Dendritic cell treated with granulocyte-macrophage colony-stimulating factor and Interleukin-4, amounts not matched to agents 40 ng/mL and 50 ng/mL, for 4 days (primary cell): ENCODE measurements at regions of chr3 and their contacts with region 1.

Region 1: GRCh38 chr3:63911873-63912767 is at the start of gene SCAANT1:
- H3K4me3 Mint-ChIP-seq: peak within 1 kb of the TSS; percentile 91
- H3K27ac Mint-ChIP-seq: peak within 1 kb of the TSS; percentile 81
- H3K4me1 Mint-ChIP-seq: peaks cover 51% of the 10 kb centered on the region
- H3K27me3 Mint-ChIP-seq: no peaks in the 10 kb centered on the region

Region 2: GRCh38 chr3:63863148-63864007 is 48.7 kb before region 1 on chr3 and contains the starts of genes ATXN7 and THOC7:
- intact Hi-C with region 1: loop called (anchors 1 kb)
- H3K4me3 Mint-ChIP-seq: peak within 1 kb of the TSS; percentile 94
- H3K27ac Mint-ChIP-seq: peak within 1 kb of the TSS; percentile 95
- H3K4me1 Mint-ChIP-seq: peaks cover 54% of the 10 kb centered on the region
- H3K27me3 Mint-ChIP-seq: no peaks in the 10 kb centered on the region

Region 3: GRCh38 chr3:63927422-63928280 is 15.5 kb after region 1 on chr3:
- intact Hi-C with region 1: loop called (anchors 1 kb)
- H3K4me3 Mint-ChIP-seq: peak overlapping the region; percentile 39
- H3K27ac Mint-ChIP-seq: peak overlapping the region; percentile 66
- H3K4me1 Mint-ChIP-seq: peaks cover 88% of the 10 kb centered on the region
- H3K27me3 Mint-ChIP-seq: no peaks in the 10 kb centered on the region